ENCODE measurements at regions of chr12 and their contacts with region 1.

Region 1: DNA sequence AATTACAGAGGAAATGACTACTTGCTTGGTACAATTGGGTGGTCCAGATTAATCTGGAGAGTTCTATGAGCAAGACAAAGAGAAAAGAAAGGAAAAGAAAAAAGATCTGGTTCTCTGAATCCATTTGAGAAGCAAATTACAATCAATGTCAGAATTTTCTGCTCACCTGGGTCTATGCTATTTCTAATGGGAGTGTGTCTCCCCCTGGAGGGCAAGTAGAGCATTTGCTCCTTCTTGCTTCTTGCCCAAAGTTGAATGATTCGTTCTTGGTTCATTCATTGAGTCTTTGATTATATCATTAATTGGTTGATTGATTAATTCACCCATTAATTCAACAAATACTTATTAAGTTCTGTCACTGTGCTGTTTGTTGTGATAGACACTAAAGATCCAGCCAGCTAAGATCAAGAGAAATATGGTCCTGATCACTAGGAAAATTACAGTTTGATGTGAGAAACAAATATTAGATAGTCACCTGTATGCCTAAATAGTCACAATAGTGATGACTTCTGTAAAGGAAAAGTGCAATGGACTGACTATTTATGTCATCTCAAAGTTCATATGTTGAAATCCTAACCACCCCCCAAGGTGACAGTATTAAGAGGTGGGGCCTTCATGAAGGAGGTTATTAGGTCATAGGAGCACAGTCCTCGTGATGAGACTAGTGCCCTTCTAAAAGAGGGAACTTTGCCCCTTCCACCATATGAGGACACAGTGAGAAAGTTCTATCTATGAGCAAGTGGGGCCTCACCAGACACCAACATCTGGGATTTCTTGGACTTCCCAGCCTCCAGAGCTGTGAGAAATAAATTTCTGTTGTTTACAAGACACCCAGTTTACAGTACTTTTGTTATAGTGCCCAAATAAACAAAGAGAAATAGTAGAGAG is 8.0 kb upstream of the ASB8 start:
- DNase-seq: no peak

Region 2: GRCh38 chr12:48080285-48080684 is 85.1 kb before region 1 on chr12:
- intact Hi-C with region 1: loop called (anchors 2 kb)
- DNase-seq: no peak

Region 3: GRCh38 chr12:48286665-48287064 is 121.3 kb after region 1 on chr12:
- intact Hi-C with region 1: no loop called
- DNase-seq: no peak

Region 4: DNA sequence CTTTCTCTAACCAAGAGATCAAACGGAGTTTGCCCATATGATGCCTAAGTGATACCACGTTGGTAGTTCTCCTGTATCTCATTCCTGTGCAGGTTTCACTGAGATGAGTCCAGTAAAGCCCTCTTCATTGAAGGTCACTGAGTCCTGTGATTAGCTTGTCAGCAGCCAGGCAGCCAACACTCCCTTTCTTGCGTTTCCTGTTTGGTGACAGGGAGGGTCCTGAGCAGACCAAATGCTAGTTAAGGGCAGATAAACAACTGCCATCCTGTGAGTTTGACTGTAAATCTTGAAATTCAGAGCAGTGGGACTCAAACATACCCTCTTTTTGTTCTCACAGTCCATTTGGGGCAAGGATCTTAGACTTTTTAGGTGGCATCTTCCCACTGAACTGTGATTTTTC is 146.0 kb after region 1 on chr12:
- intact Hi-C with region 1: no loop called
- DNase-seq: no peak

Measured in cardiac septum (tissue), 1 donor.